PC-9 (cell line): ENCODE measurements at regions of chr1 and their contacts with region 1.

Region 1: GRCh38 chr1:48572646-48573261 is 100.8 kb upstream of the SPATA6 start:
- DNase-seq: peak in 1 of 2 experiments; percentile 15
- H3K4me3 ChIP-seq: no peak overlapping the region
- H3K27ac ChIP-seq: no peak overlapping the region
- H3K4me1 ChIP-seq: no peaks in the 10 kb centered on the region
- H3K27me3 ChIP-seq: peaks cover 33% of the 10 kb centered on the region; the same call in 1 of the 2 replicates
- CTCF ChIP-seq: peak; percentile 48; the same call in 1 of the 2 replicates

Region 2: GRCh38 chr1:48661726-48662463 is 89.1 kb after region 1 on chr1:
- CTCF ChIA-PET with region 1: no interaction called
- POLR2A ChIA-PET with region 1: no interaction called
- intact Hi-C with region 1: no loop called
- DNase-seq: no peak
- H3K4me3 ChIP-seq: no peak overlapping the region
- H3K27ac ChIP-seq: no peak overlapping the region
- H3K4me1 ChIP-seq: no peaks in the 10 kb centered on the region
- H3K27me3 ChIP-seq: peaks cover 17% of the 10 kb centered on the region; the same call in 1 of the 2 replicates
- CTCF ChIP-seq: no peak

Region 3: DNA sequence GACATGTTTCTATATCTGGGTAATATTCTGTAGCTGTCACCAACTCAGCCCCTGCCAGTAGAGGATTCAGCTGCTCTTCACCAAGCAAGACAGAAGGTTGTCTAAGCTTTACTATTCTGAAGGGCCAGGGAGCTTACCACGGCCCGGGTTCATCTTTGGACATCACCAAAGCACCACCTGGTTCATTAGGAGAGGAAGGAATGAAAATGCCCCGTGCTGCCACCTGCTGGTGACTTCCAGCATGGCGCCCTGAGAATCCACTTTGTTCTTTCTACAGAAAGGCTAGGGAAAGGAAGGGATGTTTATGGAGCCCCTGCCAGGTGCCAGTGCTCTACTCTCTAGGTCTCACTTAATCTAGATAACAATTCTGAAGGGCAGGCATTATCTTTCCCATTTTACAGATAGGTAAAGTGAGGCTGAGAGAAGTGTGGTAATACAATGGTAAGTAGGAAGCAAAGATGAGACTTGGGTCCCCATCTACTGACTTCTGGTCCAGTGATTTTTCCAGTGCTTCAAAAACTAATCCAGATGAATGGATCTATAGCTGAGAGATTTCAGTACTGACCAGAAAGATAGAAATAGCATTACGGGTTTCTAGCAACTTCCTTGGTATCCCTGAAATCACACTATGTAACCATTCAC is 124.4 kb after region 1 on chr1:
- CTCF ChIA-PET with region 1: no interaction called
- POLR2A ChIA-PET with region 1: no interaction called
- intact Hi-C with region 1: loop called (anchors 5 kb)
- DNase-seq: peak in 1 of 2 experiments; percentile 38
- H3K4me3 ChIP-seq: no peak overlapping the region
- H3K27ac ChIP-seq: no peak overlapping the region
- H3K4me1 ChIP-seq: no peaks in the 10 kb centered on the region
- H3K27me3 ChIP-seq: peaks cover 32% of the 10 kb centered on the region
- CTCF ChIP-seq: peak; percentile 86

Region 4: GRCh38 chr1:48916130-48917069 is 343.6 kb after region 1 on chr1:
- CTCF ChIA-PET with region 1: interaction called, 4 read pairs
- POLR2A ChIA-PET with region 1: no interaction called
- intact Hi-C with region 1: loop called (anchors 5 kb)
- DNase-seq: peak in 1 of 2 experiments; percentile 42
- H3K4me3 ChIP-seq: no peak overlapping the region
- H3K27ac ChIP-seq: no peak overlapping the region
- H3K4me1 ChIP-seq: no peaks in the 10 kb centered on the region
- H3K27me3 ChIP-seq: peaks cover 4% of the 10 kb centered on the region; the same call in 1 of the 2 replicates
- CTCF ChIP-seq: peak; percentile 72